ENCODE measurements at regions of chr20 and their contacts with region 1.

Region 1: DNA sequence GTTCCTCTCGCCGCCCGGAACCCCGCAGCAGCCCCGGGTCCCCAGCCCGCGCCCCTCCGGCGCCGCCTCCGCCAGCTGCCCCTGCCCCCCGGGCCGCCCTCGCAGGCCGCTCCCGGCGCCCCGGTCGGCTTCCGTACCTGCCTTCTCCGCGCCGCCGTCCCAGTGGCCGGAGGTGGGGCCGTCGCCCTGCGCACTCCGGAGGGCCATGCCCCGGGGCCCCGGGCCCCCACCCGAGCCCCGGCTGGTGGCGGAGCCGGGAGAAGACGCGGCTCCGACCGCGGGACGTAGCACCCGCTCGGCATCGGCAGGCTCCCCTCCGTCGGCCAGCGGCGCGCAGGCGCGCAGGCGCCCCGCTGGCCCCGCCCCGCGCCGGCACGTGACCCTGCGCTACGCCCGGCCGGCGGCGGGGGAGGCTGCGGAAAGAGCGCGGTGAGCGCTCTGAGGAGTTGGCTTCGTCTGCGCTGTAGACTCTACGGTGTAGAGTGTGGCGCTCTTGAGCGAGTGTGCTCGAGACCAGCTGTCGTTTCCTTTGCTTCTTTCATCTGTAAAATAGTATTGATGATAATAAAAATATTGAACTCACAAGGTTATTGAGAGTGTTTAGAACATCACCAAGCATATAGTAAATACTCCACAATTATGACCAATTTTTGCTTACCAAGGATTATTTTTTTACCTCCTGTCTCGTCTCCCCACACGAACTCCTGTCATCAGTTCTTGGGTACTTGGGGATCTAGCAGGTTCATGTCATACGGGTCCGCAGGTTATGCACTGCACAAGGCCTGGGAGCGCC is at the start of gene TBC1D20:
- DNase-seq: peak; percentile 80 to 90 (median 89)
- H3K4me3 ChIP-seq: peak within 1 kb of the TSS; percentile 70 to 76
- H3K4me3 Mint-ChIP-seq: peak within 1 kb of the TSS; percentile 97 to 99 (median 98)
- H3K27ac ChIP-seq: peak within 1 kb of the TSS; percentile 84
- H3K27ac Mint-ChIP-seq: peak within 1 kb of the TSS; percentile 91 to 98 (median 97)
- H3K4me1 ChIP-seq: peaks cover 37% of the 10 kb centered on the region
- H3K4me1 Mint-ChIP-seq: peaks cover 30 to 49% (median 41%) of the 10 kb centered on the region in 4 donors
- H3K27me3 ChIP-seq: no peaks in the 10 kb centered on the region
- H3K27me3 Mint-ChIP-seq: peaks cover 0 to 2% of the 10 kb centered on the region in 2 donors
- total RNA-seq, gene TBC1D20: 42.1 to 42.9 TPM

Region 2: GRCh38 chr20:347640-348484 is 114.5 kb before region 1 on chr20:
- CTCF ChIA-PET with region 1: no interaction called
- POLR2A ChIA-PET with region 1: no interaction called
- intact Hi-C with region 1: loop called (anchors 2 kb)
- DNase-seq: peak; percentile 32 to 62 (median 36)
- H3K4me3 ChIP-seq: peak overlapping the region; percentile 57 to 81
- H3K4me3 Mint-ChIP-seq: peak overlapping the region; percentile 80 to 92 (median 89)
- H3K27ac ChIP-seq: peak overlapping the region; percentile 18
- H3K27ac Mint-ChIP-seq: peak overlapping the region in 6 of 7 donors; percentile 6 to 89 (median 60)
- H3K4me1 ChIP-seq: peaks cover 16% of the 10 kb centered on the region
- H3K4me1 Mint-ChIP-seq: peaks cover 10 to 16% (median 13%) of the 10 kb centered on the region in 4 donors
- H3K27me3 ChIP-seq: no peaks in the 10 kb centered on the region
- H3K27me3 Mint-ChIP-seq: no peaks in the 10 kb centered on the region

Region 3: DNA sequence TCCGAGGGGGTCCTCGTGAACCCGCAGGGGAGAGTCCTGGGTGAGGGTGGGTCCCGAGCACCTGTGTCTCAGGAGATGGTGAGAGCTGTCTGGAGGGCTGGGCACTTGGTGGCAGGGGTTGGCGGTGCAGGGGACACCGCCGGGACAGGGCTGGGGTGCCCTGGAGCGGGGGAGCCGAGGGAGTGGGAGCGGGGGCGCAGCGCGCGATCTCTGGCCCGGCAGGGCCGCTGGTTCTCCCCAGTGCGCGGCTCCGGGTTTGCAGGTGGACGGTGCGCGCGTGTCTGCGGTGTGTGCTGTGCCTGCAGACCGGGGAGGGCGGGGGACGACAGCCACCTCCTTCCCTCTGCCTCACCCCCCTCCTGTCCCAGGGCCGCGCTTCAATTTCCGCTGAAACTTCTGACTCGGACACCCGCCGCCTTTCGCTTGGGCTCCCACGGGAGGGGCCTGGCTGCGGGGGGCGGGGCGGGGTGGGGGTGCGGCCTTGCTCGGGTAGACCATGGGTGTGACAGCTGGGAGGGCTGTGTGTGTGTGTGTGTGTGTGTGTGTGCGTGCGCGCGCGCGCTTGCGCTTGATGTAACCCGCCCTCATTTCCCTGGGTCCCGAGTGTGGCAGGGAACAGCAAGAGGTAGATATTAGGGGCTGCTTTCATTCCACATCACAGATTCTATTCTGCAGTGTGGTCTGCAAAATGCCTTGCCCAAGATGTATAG is 80.7 kb before region 1 on chr20:
- CTCF ChIA-PET with region 1: no interaction called
- POLR2A ChIA-PET with region 1: interaction called, 5 read pairs
- intact Hi-C with region 1: loop called (anchors 1 kb)
- DNase-seq: peak; percentile 60 to 81 (median 67)
- H3K4me3 ChIP-seq: peak overlapping the region; percentile 29 to 62
- H3K4me3 Mint-ChIP-seq: peak overlapping the region; percentile 79 to 89 (median 85)
- H3K27ac ChIP-seq: no peak overlapping the region
- H3K27ac Mint-ChIP-seq: peak overlapping the region; percentile 73 to 90 (median 84)
- H3K4me1 ChIP-seq: peaks cover 8% of the 10 kb centered on the region
- H3K4me1 Mint-ChIP-seq: peaks cover 5 to 20% (median 8%) of the 10 kb centered on the region in 4 donors
- H3K27me3 ChIP-seq: no peaks in the 10 kb centered on the region
- H3K27me3 Mint-ChIP-seq: no peaks in the 10 kb centered on the region

Region 4: DNA sequence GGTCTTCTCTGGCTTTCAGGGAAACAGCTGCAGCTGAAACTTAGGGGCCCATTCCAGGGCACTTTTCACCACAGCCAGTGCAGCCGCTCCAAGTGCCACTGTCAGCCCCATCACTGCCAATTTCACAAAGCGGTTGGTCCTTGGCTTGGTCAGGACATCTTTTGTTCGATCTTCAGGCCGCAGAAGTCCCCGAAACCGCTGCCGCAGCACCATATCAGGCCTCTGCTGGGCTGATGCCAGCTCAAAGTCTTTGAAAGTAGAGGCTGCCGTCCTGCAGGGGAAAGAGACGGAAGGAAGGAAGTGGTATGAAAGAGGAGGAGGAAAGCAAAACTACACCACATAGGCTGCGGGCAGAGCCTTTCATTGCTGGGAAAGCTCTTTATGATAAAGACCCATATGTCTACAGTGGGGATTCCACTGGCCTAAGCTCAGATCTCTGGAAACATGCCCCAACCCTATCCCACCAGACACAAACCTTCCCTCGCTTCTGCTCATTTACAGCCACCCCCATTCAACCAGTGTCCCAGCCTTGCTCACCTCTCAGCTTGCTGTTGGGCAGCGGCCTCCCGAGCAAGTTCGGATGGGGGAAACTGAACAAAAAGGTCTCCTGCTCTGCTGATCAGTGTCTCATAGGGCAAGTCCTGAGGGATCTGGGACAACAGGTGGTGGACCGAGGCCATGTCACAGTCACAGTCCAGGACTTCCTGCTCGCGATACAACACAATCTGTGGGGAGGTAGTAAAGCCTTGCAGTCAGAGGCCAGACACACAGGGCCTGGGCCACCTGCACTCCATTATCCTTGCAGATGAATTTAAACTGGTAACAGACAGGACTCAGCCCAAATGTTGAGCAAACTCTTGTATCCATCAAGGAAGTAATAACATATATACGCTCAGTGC is 23.6 kb before region 1 on chr20:
- CTCF ChIA-PET with region 1: no interaction called
- POLR2A ChIA-PET with region 1: interaction called, 23 read pairs
- intact Hi-C with region 1: loop called (anchors 1 kb)
- DNase-seq: peak; percentile 66 to 78 (median 75)
- H3K4me3 ChIP-seq: peak overlapping the region; percentile 26
- H3K4me3 Mint-ChIP-seq: peak overlapping the region; percentile 73 to 86 (median 82)
- H3K27ac ChIP-seq: no peak overlapping the region
- H3K27ac Mint-ChIP-seq: peak overlapping the region; percentile 14 to 91 (median 84)
- H3K4me1 ChIP-seq: peaks cover 53% of the 10 kb centered on the region
- H3K4me1 Mint-ChIP-seq: peaks cover 41 to 69% (median 55%) of the 10 kb centered on the region in 4 donors
- H3K27me3 ChIP-seq: no peaks in the 10 kb centered on the region
- H3K27me3 Mint-ChIP-seq: no peaks in the 10 kb centered on the region

Region 5: GRCh38 chr20:478949-479429 is 16.6 kb after region 1 on chr20:
- CTCF ChIA-PET with region 1: interaction called, 13 read pairs
- POLR2A ChIA-PET with region 1: interaction called, 5 read pairs
- intact Hi-C with region 1: loop called (anchors 1 kb)
- DNase-seq: peak; percentile 43 to 72 (median 67)
- H3K4me3 ChIP-seq: no peak overlapping the region
- H3K4me3 Mint-ChIP-seq: no peak overlapping the region
- H3K27ac ChIP-seq: no peak overlapping the region
- H3K27ac Mint-ChIP-seq: peak overlapping the region in 4 of 7 donors; percentile 18 to 48 (median 28)
- H3K4me1 ChIP-seq: peaks cover 21% of the 10 kb centered on the region
- H3K4me1 Mint-ChIP-seq: peaks cover 16 to 28% (median 20%) of the 10 kb centered on the region in 4 donors
- H3K27me3 ChIP-seq: no peaks in the 10 kb centered on the region
- H3K27me3 Mint-ChIP-seq: no peaks in the 10 kb centered on the region

Region 6: DNA sequence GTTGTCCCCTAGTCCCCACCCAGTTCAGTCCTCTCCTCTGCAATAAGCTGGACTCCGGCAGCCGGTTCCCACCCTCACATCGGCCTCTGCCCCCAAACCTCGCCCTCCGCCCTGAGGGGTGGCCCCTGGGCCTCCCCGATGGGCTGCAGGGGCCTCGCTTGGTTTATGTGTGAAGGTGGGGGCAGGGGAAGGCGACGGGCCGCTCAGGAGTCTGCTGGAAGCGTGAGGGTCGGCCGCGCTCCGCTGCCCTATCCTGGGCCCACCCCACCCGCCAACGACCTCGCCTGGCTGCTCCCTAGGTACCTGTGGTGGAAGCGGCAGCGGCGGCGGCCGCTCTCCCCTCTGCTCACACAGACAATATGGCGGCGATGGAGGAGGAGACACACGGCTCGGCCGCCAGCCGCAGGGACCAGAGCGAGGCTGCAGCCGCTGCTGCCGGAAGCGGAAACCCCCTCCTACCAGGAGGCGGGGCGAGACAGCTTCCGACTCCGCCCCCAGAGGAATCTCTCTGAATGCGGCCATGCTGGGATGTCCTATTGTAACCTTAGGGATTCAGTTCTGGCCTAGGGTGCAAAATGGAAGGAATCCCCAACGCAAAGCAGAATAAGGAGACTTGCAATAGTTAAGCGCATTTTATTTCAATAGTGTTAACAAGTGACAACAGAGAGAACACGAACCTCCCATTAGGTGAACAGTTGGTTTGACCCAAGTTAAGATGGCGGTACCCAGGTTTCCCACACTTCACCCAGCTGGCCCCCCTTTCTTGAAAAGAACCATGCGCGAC is 81.2 kb after region 1 on chr20 and contains the start of gene CSNK2A1:
- CTCF ChIA-PET with region 1: no interaction called
- POLR2A ChIA-PET with region 1: interaction called, 11 read pairs
- intact Hi-C with region 1: loop called (anchors 1 kb)
- DNase-seq: peak; percentile 94 to 99 (median 97)
- H3K4me3 ChIP-seq: peak within 1 kb of the TSS; percentile 45 to 93
- H3K4me3 Mint-ChIP-seq: peak within 1 kb of the TSS; percentile 85 to 100 (median 92)
- H3K27ac ChIP-seq: peak within 1 kb of the TSS; percentile 80
- H3K27ac Mint-ChIP-seq: peak within 1 kb of the TSS; percentile 98 to 100 (median 99)
- H3K4me1 ChIP-seq: peaks cover 50% of the 10 kb centered on the region
- H3K4me1 Mint-ChIP-seq: peaks cover 28 to 56% (median 43%) of the 10 kb centered on the region in 4 donors
- H3K27me3 ChIP-seq: no peaks in the 10 kb centered on the region
- H3K27me3 Mint-ChIP-seq: peaks cover 0 to 5% of the 10 kb centered on the region in 2 donors
- total RNA-seq, gene CSNK2A1: 81.6 to 87.8 TPM

Region 7: DNA sequence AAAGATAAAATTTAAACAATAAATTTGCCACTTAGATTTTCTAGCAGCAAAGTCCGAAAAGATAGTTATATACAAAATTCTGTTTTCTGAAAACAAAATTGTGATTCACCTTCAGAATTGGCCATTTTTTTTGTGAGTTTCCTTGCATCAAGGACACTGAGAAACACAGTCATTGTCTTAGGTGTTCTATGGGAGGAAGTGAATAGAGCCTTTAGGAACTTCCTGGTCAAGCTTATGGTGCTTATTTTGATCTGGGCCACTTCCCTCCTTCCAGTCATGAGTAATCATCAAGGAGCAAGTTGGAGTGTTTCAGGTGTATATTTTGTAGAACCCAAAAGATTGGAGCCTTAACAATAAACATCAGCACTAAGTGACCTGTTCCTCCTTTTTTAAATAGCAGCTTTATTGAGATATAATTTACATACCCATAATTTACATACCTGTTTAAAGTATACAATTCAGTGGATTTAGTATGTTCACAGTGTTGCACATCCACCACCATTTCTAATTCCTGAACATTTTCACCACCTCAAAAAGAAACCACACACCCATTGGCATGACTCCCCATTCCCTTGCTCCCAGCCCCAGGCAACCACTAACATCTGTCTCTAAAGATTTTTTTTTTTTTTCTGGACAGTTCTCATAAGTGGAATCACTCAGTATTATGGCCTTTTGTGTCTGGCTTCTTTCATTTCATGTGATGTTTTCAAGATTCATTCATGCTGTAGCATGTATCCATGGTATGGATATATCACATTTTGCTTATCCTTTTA is 704.7 kb after region 1 on chr20:
- CTCF ChIA-PET with region 1: no interaction called
- POLR2A ChIA-PET with region 1: no interaction called
- intact Hi-C with region 1: no loop called
- DNase-seq: no peak
- H3K4me3 ChIP-seq: no peak overlapping the region
- H3K4me3 Mint-ChIP-seq: no peak overlapping the region
- H3K27ac ChIP-seq: no peak overlapping the region
- H3K27ac Mint-ChIP-seq: peak overlapping the region in 1 of 7 donors; percentile 10
- H3K4me1 ChIP-seq: no peaks in the 10 kb centered on the region
- H3K4me1 Mint-ChIP-seq: peaks cover 0 to 4% (median 0%) of the 10 kb centered on the region in 4 donors
- H3K27me3 ChIP-seq: no peaks in the 10 kb centered on the region
- H3K27me3 Mint-ChIP-seq: no peaks in the 10 kb centered on the region